Activated naive CD4-positive, alpha-beta T cell treated with anti-CD3 and anti-CD28 coated beads for 36 hours (primary cell): ENCODE measurements at regions of chr6 and their contacts with region 1.

Region 1: DNA sequence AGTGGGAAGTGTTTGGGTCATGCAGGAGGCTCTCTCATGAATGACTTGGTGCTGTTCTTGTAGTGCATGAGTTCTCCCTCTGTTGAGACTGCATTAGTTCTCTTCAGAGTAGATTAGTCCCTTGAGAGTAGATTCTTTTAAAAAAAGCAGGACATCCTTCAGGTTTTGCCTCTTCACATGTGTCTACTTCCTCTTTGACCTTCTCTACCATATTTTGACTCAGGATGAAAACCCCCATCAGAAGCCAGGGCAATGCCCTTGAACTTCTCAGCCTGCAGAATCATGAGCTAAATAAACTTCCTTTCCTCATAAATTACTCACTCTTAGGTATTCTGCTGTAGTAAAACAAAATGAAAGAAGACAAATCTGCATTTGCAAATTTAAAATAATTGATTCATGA is 170.3 kb downstream of the CD109 start:
- DNase-seq: no peak
- H3K4me3 Mint-ChIP-seq: no peak overlapping the region
- H3K27ac Mint-ChIP-seq: no peak overlapping the region
- H3K4me1 Mint-ChIP-seq: no peaks in the 10 kb centered on the region
- H3K27me3 Mint-ChIP-seq: no peaks in the 10 kb centered on the region

Region 2: GRCh38 chr6:73888050-73888449 is 21.7 kb after region 1 on chr6:
- CTCF ChIA-PET with region 1: no interaction called
- intact Hi-C with region 1: no loop called
- DNase-seq: no peak
- H3K4me3 Mint-ChIP-seq: no peak overlapping the region
- H3K27ac Mint-ChIP-seq: no peak overlapping the region
- H3K4me1 Mint-ChIP-seq: no peaks in the 10 kb centered on the region
- H3K27me3 Mint-ChIP-seq: no peaks in the 10 kb centered on the region

Region 3: GRCh38 chr6:73903155-73903554 is 36.9 kb after region 1 on chr6:
- CTCF ChIA-PET with region 1: no interaction called
- intact Hi-C with region 1: loop called (anchors 5 kb)
- DNase-seq: no peak
- H3K4me3 Mint-ChIP-seq: no peak overlapping the region
- H3K27ac Mint-ChIP-seq: no peak overlapping the region
- H3K4me1 Mint-ChIP-seq: no peaks in the 10 kb centered on the region
- H3K27me3 Mint-ChIP-seq: peaks cover 4% of the 10 kb centered on the region